HepG2 (cell line): ENCODE measurements at regions of chr12 and their contacts with region 1.

Region 1: DNA sequence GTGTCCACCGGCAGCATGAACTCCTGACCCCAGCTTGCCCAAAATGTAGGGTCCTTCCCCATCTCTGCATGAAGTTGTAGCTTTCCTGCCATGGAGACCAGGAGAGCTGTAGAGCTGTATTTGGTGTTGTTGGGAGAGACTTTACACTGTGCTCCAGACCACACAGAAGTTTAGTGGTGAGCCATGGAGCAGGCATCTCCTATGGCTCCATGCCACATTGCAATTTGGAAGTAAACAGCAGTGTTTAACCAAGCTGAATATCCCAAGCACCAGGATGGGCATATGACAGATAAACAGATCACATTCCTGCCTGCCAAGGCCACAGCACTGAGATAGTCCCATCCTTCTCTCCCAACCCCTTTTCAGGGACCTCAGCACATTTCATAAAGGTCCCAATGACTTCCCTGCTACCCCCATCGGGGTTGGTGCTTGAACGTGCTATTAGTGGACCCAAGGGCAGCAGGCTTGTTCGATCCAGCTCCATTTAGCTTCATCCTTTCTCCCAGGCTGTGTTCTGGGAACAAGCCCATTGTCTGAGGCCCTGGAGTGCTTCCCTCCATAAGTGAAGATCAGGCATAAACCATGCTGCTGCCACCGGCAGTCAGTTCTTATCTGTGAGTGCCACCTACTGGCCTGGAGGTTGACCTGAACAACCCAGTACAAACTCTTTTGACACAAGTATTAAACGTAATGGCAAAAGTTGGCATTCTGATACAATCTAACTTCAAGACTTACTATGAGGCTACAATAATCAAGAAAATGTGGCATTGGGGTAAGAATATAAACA is 172.3 kb upstream of the ATXN7L3B start:
- DNase-seq: peak; percentile 21
- ATAC-seq: peak; percentile 84
- H3K4me3 ChIP-seq: no peak overlapping the region
- H3K27ac ChIP-seq: no peak overlapping the region
- H3K4me1 ChIP-seq: no peaks in the 10 kb centered on the region
- H3K27me3 ChIP-seq: no peaks in the 10 kb centered on the region
- CTCF ChIP-seq: peak; percentile 64
- EP300 ChIP-seq: no peak
- POLR2A ChIP-seq: no peak
- RAD21 ChIP-seq: no peak

Region 2: DNA sequence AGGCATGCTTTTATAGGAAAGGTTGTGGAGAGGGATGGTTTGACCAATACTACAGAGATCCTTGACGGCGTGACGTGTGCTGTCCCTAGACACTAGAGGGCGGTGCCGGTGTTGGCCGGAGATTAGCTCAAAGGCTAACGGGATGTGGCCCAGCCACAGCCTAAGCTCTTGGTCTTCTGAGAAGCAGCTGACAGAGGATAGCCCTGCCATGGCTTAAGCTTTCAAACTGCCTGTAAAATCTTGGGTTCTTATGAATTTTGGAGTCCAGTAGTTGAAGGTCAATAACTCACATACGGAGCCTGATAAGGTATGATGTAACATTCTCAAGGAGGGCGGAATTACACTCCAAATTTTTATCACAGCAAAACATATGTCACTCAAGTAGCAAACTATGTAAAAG is 343.4 kb before region 1 on chr12:
- CTCF ChIA-PET with region 1: no interaction called
- POLR2A ChIA-PET with region 1: no interaction called
- in situ Hi-C with region 1: no loop called
- intact Hi-C with region 1: loop called (anchors 1 kb)
- DNase-seq: peak; percentile 50
- ATAC-seq: peak; percentile 100
- H3K4me3 ChIP-seq: no peak overlapping the region
- H3K27ac ChIP-seq: no peak overlapping the region
- H3K4me1 ChIP-seq: no peaks in the 10 kb centered on the region
- H3K27me3 ChIP-seq: no peaks in the 10 kb centered on the region
- CTCF ChIP-seq: peak; percentile 84
- EP300 ChIP-seq: no peak
- POLR2A ChIP-seq: no peak
- RAD21 ChIP-seq: 0 out of 2 replicates have a peak, but pooled peaks have one; percentile 11

Region 3: GRCh38 chr12:74111688-74112360 is 253.5 kb before region 1 on chr12:
- CTCF ChIA-PET with region 1: no interaction called
- POLR2A ChIA-PET with region 1: no interaction called
- in situ Hi-C with region 1: no loop called
- intact Hi-C with region 1: loop called (anchors 5 kb)
- DNase-seq: peak; percentile 13
- ATAC-seq: peak; percentile 76
- H3K4me3 ChIP-seq: no peak overlapping the region
- H3K27ac ChIP-seq: no peak overlapping the region
- H3K4me1 ChIP-seq: no peaks in the 10 kb centered on the region
- H3K27me3 ChIP-seq: no peaks in the 10 kb centered on the region
- CTCF ChIP-seq: peak; percentile 63
- EP300 ChIP-seq: no peak
- POLR2A ChIP-seq: no peak
- RAD21 ChIP-seq: no peak

Region 4: DNA sequence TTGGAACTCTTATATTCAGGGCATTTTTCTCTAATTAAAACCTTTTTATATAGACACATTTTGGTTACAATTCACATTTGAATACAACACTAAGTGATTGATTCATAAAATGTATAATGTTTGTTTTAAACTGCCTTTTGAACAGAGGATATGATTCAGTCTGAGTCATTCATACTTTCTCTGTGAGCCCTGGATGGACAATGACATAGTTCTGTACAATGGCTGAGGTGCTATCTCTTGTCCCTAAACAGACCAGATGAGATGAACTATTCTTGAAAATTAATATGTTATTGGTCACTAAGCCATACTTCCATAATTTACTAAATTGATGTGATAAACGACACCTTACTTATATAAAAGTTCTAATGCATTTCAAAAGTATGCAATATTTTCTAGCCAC is 27.4 kb before region 1 on chr12:
- CTCF ChIA-PET with region 1: no interaction called
- POLR2A ChIA-PET with region 1: no interaction called
- in situ Hi-C with region 1: no loop called
- intact Hi-C with region 1: no loop called
- DNase-seq: peak; percentile 9
- ATAC-seq: no peak
- H3K4me3 ChIP-seq: no peak overlapping the region
- H3K27ac ChIP-seq: no peak overlapping the region
- H3K4me1 ChIP-seq: no peaks in the 10 kb centered on the region
- H3K27me3 ChIP-seq: no peaks in the 10 kb centered on the region
- CTCF ChIP-seq: no peak
- EP300 ChIP-seq: no peak
- POLR2A ChIP-seq: no peak
- RAD21 ChIP-seq: no peak